ENCODE measurements at regions of chr1 and their contacts with region 1.

Region 1: DNA sequence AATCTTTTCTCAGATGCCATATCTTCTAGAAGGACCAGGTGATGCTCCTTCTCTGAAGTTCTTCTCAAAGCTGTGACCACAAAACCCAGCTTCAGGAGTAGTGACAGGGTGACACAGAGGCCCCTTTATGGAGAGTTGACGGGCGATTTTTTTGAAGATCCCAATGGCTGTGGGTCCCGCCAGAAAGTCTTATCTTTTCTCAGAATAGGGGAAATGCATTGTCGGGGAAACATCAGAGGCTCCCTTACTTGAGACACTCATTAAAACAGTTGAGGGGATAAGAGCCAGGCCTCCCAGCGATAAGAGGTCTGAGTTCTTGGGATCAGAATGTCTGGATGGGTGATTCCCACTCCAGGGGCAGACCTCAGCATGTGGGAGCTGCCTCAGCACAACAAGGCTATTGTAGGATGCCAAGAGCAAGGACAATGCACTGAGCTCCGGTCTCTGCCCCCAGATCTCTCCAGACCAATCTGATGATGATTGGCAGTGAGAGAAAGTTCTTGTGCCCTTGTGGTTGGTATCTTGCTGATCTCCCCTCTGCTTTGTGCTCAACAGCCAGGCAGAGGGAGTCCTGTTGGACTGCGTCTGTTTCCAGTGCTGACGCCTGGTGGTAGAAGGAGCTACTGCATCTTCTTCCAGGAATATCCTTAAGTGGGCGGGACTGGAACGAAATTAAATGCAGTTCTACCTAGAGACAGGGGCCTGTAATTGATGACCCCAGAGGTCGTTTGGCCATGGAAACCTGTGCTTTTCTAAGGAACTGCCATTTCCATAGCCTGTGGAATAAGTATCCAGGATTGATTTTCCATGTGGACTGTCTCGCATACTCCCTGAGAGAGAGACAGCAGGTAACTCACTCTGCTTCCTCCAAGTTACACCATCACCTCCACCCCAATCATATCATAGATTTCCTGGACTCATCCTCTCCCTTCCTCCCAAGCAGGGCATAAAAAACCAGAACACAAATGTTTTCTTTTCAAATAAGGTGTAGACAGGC is 6.8 kb upstream of the ACKR1 start:
- DNase-seq: peak; percentile 59
- CTCF ChIP-seq: peak; percentile 76

Region 2: GRCh38 chr1:159132271-159132881 is 65.5 kb before region 1 on chr1:
- CTCF ChIA-PET with region 1: interaction called, 20 read pairs
- POLR2A ChIA-PET with region 1: no interaction called
- DNase-seq: peak; percentile 59
- CTCF ChIP-seq: peak; percentile 83

Region 3: DNA sequence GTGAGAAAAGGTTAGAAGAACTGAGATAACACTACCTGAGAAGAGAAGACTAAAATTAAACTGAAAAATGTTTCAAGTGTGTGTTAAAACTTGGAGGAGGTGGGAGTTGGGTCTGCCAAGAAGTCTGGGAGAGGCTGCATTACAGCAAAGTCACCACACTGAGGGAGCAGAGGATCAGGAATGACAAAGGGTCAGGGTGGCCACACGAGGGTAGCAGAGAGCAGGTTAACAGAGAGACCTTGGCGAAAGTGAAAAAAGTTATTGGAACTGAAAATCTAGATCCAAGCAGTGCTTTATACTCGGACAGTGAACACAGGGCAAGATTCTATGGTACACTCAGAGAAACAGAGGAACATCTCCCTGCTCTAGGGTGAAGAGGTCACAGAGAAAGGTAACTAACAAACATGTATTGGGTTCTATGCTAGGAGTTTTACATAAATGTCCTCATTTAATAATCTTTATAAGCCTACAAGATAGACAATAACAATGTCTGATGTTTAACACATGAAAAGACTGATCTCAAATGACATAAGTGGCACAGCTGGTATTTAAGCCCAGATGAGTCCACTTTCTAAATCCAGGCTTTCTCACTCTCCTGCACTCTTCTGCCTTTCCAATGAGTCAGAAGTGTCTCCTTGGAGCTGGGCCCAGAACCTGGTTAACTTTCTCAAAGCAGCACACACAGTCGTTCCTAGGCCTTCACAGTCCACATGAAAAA is 36.7 kb before region 1 on chr1:
- CTCF ChIA-PET with region 1: interaction called, 40 read pairs
- POLR2A ChIA-PET with region 1: no interaction called
- DNase-seq: peak; percentile 67
- CTCF ChIP-seq: peak; percentile 99

Region 4: GRCh38 chr1:159184201-159184600 is 13.7 kb before region 1 on chr1:
- CTCF ChIA-PET with region 1: interaction called, 10 read pairs
- POLR2A ChIA-PET with region 1: no interaction called
- DNase-seq: no peak
- CTCF ChIP-seq: no peak

Region 5: GRCh38 chr1:159266832-159267231 is 69.0 kb after region 1 on chr1:
- CTCF ChIA-PET with region 1: no interaction called
- POLR2A ChIA-PET with region 1: no interaction called
- DNase-seq: no peak
- CTCF ChIP-seq: no peak